Spleen (tissue), 13 donors: ENCODE measurements at regions of chr10 and their contacts with region 1.

Region 1: GRCh38 chr10:102729029-102730026 is 14.4 kb upstream of the WBP1L start:
- DNase-seq: peak; percentile 93
- H3K4me3 ChIP-seq: no peak overlapping the region
- H3K27ac ChIP-seq: peak overlapping the region in 2 of 8 donors; percentile 29 to 40
- H3K4me1 ChIP-seq: peaks cover 0 to 14% (median 10%) of the 10 kb centered on the region in 6 donors
- H3K27me3 ChIP-seq: no peaks in the 10 kb centered on the region
- CTCF ChIP-seq: peak; percentile 76 to 97 (median 88)
- POLR2A ChIP-seq: no peak

Region 2: GRCh38 chr10:102615361-102615760 is 114.0 kb before region 1 on chr10:
- intact Hi-C with region 1: no loop called
- DNase-seq: no peak
- H3K4me3 ChIP-seq: no peak overlapping the region
- H3K27ac ChIP-seq: peak overlapping the region in 5 of 8 donors; percentile 12 to 51 (median 37)
- H3K4me1 ChIP-seq: peaks cover 10 to 77% (median 43%) of the 10 kb centered on the region in 6 donors
- H3K27me3 ChIP-seq: no peaks in the 10 kb centered on the region
- CTCF ChIP-seq: peak in 5 of 11 experiments; percentile 9 to 36 (median 21)
- POLR2A ChIP-seq: no peak

Region 3: DNA sequence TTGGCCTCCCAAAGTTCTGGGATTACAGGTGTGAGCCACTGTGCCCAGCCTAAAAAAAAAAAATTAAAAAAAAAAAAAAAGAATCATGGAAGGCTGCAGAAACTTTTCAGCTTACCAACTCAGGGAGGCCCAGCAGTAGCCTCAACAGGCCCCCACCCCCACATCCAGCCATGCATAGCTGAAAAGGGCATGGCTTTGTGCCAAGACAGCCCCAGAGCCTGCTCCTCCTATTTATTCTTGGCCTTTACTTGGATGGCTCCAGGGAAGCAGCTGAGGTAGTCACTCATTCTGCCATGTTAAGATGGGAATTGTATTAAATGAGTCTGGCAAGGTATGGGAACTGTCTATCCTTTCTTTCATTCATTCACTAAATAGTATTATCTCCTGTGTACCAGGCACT is 175.0 kb after region 1 on chr10:
- intact Hi-C with region 1: loop called (anchors 5 kb)
- DNase-seq: no peak
- H3K4me3 ChIP-seq: no peak overlapping the region
- H3K27ac ChIP-seq: no peak overlapping the region
- H3K4me1 ChIP-seq: no peaks in the 10 kb centered on the region
- H3K27me3 ChIP-seq: no peaks in the 10 kb centered on the region
- CTCF ChIP-seq: no peak
- POLR2A ChIP-seq: no peak